A673 (cell line): ENCODE measurements at regions of chr1 and their contacts with region 1.

Region 1: DNA sequence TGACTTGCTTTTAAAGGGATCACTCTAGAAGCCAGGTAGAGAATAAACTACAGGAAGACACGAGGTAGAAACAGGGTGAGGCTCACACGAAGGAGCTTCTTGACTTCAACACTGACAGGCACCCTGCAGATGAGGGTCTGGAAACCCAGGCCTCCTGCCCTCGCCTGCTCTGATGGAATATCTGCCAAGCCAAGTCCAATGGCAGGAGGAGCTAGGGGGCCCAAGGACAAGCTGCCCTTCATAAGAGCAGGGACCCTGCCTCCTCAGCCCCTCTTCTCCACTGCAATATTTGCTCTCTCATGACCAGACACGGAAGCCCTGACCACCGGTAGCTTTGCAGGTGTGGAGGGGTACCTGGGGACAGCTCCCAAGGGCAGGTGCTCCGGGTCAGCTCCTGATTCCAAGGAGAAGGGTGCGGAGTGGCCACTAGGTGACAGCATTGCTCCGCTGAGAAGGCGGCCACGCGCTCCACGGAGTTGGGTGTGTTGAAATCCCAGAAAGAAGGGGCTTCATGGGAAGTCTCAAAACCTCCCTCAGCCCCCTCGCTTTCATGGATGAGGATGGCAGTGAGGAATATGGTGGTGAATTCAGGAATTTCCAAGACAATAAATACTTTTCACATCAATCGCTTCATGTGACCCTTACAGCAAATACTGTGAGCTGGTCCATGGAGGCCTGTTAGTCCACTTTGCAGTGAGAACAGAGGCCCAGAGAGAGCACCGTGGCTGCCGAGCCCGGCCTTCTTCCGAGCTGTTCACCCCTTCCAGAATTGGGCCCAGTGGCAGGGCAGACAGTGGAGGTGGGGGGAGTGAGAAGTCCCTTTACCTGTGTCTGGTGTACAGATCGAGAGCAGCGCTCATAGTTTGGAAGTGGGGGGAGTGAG is 33.2 kb upstream of the PAX7 start:
- DNase-seq: peak; percentile 70
- H3K4me3 ChIP-seq: no peak overlapping the region
- H3K27ac ChIP-seq: no peak overlapping the region
- H3K4me1 ChIP-seq: peaks cover 10% of the 10 kb centered on the region
- H3K27me3 ChIP-seq: no peaks in the 10 kb centered on the region
- CTCF ChIP-seq: peak; percentile 97

Region 2: GRCh38 chr1:18681423-18681835 is 84.0 kb after region 1 on chr1:
- CTCF ChIA-PET with region 1: interaction called, 8 read pairs
- POLR2A ChIA-PET with region 1: no interaction called
- intact Hi-C with region 1: loop called (anchors 1 kb)
- DNase-seq: peak; percentile 85
- H3K4me3 ChIP-seq: no peak overlapping the region
- H3K27ac ChIP-seq: no peak overlapping the region
- H3K4me1 ChIP-seq: peaks cover 21% of the 10 kb centered on the region
- H3K27me3 ChIP-seq: no peaks in the 10 kb centered on the region
- CTCF ChIP-seq: peak; percentile 77

Region 3: DNA sequence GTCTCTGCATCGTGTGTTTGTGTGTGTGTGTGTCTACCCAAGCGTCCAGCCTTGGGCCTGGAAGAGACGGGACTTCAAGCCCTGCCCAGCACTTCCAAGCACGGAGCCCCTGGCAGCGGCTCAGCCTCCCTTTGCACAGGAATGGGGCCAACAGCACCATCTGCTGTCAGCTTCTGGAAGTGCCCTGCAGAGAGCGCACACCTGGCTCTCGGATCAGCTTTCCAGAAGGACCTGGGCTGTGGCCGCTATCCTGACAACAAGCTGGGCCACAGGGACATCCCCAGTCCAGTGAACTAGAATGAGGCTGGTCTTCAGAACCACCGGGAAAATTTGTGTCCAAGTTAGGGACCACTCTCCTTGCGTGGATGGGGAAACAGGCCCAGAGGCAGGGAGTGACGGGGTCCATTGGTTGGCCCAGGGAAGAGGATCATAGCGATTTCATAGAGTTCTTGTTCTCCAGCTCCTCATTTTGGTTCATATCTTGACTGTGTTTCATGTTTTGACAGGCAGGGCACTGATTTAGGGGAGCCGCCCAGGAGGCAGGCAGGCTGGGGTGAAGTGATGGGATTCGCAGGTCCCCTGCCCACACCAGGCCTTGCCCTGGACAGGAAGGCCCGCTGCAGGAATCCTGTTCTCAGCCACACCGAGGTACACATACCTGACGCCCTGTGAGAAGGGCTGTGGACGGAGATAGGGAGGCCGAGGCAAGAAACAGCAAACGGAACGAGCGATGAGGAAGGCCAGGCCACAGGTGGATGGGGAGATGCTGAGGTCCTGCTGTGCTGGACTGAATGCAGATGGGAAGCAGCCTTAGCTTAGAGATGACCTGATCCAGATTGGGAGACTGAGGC is 223.6 kb after region 1 on chr1:
- CTCF ChIA-PET with region 1: interaction called, 15 read pairs
- POLR2A ChIA-PET with region 1: interaction called, 4 read pairs
- intact Hi-C with region 1: loop called (anchors 1 kb)
- DNase-seq: peak; percentile 82
- H3K4me3 ChIP-seq: no peak overlapping the region
- H3K27ac ChIP-seq: no peak overlapping the region
- H3K4me1 ChIP-seq: no peaks in the 10 kb centered on the region
- H3K27me3 ChIP-seq: no peaks in the 10 kb centered on the region
- CTCF ChIP-seq: peak; percentile 94

Region 4: GRCh38 chr1:18875107-18875795 is 277.9 kb after region 1 on chr1:
- CTCF ChIA-PET with region 1: interaction called, 14 read pairs
- POLR2A ChIA-PET with region 1: no interaction called
- intact Hi-C with region 1: loop called (anchors 1 kb)
- DNase-seq: peak; percentile 91
- H3K4me3 ChIP-seq: no peak overlapping the region
- H3K27ac ChIP-seq: no peak overlapping the region
- H3K4me1 ChIP-seq: peaks cover 7% of the 10 kb centered on the region
- H3K27me3 ChIP-seq: no peaks in the 10 kb centered on the region
- CTCF ChIP-seq: peak; percentile 95